ENCODE measurements at regions of chr1 and their contacts with region 1.

Region 1: DNA sequence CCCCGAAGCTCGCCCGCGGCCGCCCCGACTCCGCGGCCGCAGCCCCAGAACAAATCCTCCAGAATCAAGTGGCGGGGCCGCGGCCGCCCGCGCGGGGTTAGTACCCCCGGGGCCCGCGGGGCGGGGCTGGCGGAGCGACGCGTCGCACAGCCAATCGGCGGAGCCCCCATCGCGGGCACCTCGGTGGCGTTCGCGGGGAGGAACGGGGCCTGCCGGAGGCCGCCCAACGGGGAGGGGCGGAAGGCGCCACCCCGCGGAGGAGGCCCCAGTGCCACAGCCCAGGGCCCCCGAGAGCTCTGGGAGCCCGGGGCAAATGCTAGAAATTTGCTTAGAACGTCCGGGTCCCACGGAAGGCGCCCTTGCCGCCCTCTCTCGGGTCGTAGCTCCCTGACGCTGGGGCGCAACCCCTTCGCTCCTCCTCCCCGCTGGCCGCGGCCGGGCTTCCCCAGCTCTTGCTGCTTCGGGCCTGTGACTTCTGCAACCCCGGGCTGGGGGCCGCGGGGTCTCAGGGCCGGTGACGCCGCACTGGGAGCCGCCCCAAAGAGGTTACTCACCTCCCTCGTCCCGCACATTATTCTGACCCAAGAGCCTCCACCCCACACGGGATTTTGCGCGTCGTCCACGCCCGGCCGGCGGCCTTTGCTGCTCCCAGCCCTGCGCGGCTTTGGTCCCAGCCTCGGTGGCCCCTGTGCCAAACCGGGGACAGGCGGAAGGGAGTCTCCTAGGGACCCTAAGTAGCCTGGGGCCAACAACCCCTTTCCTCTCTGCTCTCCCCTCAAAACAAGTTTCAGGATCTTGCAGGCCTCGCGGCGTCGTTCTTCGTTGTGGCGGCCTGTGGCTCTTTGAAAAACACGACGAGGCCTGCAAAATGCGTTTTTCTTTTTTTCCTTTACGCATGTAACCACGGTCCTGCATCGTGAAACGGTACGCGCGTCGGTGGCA is at the start of gene RUNX3:
- DNase-seq: peak; percentile 74
- ATAC-seq: peak; percentile 45
- H3K4me3 Mint-ChIP-seq: peak within 1 kb of the TSS; percentile 71
- H3K27ac Mint-ChIP-seq: no peak within 1 kb of the TSS
- H3K4me1 Mint-ChIP-seq: peaks cover 68% of the 10 kb centered on the region
- H3K27me3 Mint-ChIP-seq: peaks cover 91% of the 10 kb centered on the region
- CTCF ChIP-seq: no peak
- total RNA-seq, gene RUNX3: 1.5 to 1.8 TPM (median 1.8 TPM) in 3 replicates

Region 2: GRCh38 chr1:24897767-24898483 is 32.5 kb before region 1 on chr1:
- CTCF ChIA-PET with region 1: interaction called, 19 read pairs
- POLR2A ChIA-PET with region 1: interaction called, 4 read pairs
- DNase-seq: peak; percentile 79
- ATAC-seq: peak; percentile 93
- H3K4me3 Mint-ChIP-seq: no peak overlapping the region
- H3K27ac Mint-ChIP-seq: no peak overlapping the region
- H3K4me1 Mint-ChIP-seq: peaks cover 7% of the 10 kb centered on the region
- H3K27me3 Mint-ChIP-seq: peaks cover under 1% of the 10 kb centered on the region; the same call in 1 of the 2 replicates
- CTCF ChIP-seq: peak; percentile 71

Region 3: DNA sequence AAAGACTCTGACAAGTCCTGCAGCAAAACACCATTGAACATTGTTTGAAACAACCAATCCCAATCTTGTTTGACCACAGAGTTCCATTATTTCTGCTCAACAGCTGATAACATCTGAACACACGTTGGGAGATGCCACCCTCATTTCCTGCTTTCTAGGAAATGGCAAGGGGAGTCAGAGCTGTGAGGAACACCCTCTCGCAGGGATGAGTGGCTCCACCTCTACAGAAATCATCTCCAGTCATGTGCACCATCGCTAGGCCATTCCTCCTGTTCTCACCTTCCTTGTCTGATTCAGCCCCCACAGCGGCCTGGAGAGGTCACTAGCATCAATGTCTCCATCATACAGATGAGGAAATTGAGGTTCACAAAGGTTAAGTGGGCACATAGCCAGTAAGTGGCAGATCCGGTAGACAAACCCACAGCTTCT is 22.0 kb after region 1 on chr1:
- CTCF ChIA-PET with region 1: interaction called, 11 read pairs
- POLR2A ChIA-PET with region 1: no interaction called
- DNase-seq: no peak
- ATAC-seq: no peak
- H3K4me3 Mint-ChIP-seq: no peak overlapping the region
- H3K27ac Mint-ChIP-seq: peak overlapping the region; percentile 83; the same call in 1 of the 2 replicates
- H3K4me1 Mint-ChIP-seq: peaks cover 35% of the 10 kb centered on the region
- H3K27me3 Mint-ChIP-seq: no peaks in the 10 kb centered on the region
- CTCF ChIP-seq: no peak

Region 4: GRCh38 chr1:25037174-25038074 is 106.9 kb after region 1 on chr1:
- CTCF ChIA-PET with region 1: interaction called, 27 read pairs
- POLR2A ChIA-PET with region 1: no interaction called
- DNase-seq: peak; percentile 75
- ATAC-seq: peak; percentile 82
- H3K4me3 Mint-ChIP-seq: no peak overlapping the region
- H3K27ac Mint-ChIP-seq: no peak overlapping the region
- H3K4me1 Mint-ChIP-seq: no peaks in the 10 kb centered on the region
- H3K27me3 Mint-ChIP-seq: no peaks in the 10 kb centered on the region
- CTCF ChIP-seq: peak; percentile 66

Region 5: DNA sequence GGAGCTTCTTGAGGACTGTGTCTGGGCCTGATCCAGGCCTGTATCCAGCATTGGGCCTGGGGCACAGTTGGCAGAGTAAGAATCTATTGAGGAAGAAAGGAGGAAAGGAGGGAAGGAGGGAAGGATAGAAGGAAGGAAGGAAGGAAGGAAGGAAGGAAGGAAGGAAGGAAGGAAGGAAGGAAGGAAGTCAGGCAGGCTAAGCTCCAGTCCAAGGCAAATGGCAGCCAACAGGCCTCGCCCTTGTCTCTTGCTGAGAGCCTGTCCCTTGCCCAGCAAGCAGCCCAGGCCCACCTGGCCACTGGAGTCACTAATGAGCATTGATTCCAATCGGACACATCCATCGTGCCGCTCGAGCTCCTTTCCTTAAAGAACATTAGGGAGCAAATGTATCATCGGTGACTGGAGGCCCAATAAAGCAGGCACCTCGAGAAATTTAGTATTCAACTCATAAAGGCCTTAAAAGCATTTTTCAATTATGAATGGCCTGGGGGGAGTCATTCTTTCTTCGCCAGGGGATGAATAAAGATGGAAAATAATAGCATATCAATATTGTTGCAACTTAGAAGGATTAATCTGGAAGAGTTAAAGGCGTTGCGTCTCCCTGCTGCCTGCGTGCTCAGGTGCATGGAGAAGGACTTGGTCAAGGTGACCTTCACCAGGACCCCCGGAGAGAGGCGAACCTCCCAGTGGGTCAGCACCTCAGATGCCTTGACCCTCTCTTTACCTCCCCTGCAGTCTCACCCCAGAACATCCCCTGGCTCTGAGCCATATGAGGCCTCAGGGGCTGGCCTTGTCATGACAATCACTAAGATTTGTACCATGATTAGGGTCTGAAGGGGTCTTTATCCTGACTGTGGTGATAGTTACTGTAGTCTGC is 144.1 kb after region 1 on chr1:
- CTCF ChIA-PET with region 1: no interaction called
- POLR2A ChIA-PET with region 1: no interaction called
- DNase-seq: no peak
- ATAC-seq: no peak
- H3K4me3 Mint-ChIP-seq: no peak overlapping the region
- H3K27ac Mint-ChIP-seq: no peak overlapping the region
- H3K4me1 Mint-ChIP-seq: no peaks in the 10 kb centered on the region
- H3K27me3 Mint-ChIP-seq: no peaks in the 10 kb centered on the region; the same call in 1 of the 2 replicates
- CTCF ChIP-seq: no peak

Measured in WTC11 (cell line).